ENCODE measurements at regions of chr13 and their contacts with region 1.

Region 1: GRCh38 chr13:110220471-110220870 is 86.5 kb downstream of the COL4A1 start:
- DNase-seq: no peak
- ATAC-seq: no peak
- H3K4me3 ChIP-seq: no peak overlapping the region
- H3K27ac ChIP-seq: no peak overlapping the region
- H3K4me1 ChIP-seq: no peaks in the 10 kb centered on the region
- H3K27me3 ChIP-seq: no peaks in the 10 kb centered on the region
- CTCF ChIP-seq: no peak

Region 2: DNA sequence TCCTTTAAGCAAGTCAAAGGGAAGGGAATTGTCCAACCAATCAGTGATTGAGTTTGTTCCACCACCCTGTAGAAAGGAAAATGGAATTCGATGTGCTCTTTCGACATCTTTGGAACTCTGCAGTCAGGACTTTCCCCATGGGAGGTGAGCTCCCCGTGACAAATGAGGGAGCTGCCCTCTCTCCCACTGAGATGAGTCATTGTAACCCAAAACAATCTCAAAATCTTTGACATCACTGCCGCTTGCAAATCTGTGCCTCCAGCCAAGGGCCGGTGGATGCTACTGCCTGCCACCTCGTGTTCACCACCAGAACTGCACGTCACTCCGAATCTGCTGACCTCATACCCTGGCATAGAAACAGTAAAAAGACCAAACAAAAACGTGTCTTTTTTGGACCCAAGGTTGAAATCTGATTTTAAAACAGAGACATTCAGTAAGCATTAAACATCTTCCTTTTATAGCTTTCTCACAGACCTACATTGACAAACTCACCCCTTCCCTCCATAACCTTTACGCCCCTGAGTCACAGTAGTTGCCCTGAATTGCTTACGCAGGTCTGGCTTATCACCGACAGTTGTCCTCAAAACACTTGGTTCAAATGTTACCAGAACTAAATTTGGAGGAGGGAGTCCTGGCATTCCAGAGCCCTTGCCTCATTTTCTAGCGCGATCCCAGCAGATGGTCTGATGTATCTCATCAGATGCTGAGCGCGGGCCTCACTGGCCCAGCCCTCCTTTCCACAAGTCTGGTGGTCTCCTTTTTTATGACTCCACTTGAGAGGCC is 191.9 kb after region 1 on chr13:
- intact Hi-C with region 1: loop called in 1 of 3 experiments (anchors 5 kb)
- DNase-seq: peak; percentile 69 to 89 (median 82)
- ATAC-seq: peak; percentile 82 to 95 (median 90)
- H3K4me3 ChIP-seq: no peak overlapping the region
- H3K27ac ChIP-seq: peak overlapping the region in 3 of 4 donors; percentile 35 to 77 (median 55)
- H3K4me1 ChIP-seq: peaks cover 0 to 7% (median 3%) of the 10 kb centered on the region in 3 donors
- H3K27me3 ChIP-seq: no peaks in the 10 kb centered on the region
- CTCF ChIP-seq: peak; percentile 73 to 86 (median 82)

Region 3: DNA sequence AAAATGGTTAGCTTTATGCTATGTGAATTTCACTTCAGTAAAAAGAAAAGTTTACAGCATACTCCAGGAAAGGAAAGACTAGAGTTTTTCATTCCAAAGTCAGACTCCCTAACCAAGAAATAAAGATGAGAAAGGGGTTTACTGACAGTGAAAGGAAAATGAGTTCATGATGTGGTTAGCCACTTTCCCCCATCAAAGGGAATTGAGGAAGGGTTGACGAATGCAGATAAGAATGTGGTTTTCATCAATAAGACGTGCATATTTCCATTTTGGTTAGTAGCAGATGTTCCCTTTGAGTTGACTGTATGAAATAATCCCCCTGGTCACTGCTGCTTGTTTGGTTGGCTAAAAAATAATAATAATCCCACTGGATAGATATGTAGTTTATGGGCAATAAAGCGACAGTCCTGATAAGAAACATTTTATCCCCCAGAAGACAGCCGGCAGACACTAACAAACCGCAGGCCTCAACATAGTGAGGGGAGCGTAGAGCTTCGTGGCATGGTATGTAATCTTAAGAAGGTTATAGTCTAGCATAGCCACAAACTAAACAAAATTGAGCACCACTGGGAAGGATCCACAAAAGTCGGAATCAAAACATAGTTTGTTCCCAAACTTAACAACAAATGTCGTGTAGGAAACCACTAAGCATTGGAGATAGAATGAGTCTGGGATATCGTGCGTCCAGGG is 201.4 kb after region 1 on chr13:
- intact Hi-C with region 1: loop called in 1 of 3 experiments (anchors 5 kb)
- DNase-seq: no peak
- ATAC-seq: peak in 1 of 4 donors; percentile 25
- H3K4me3 ChIP-seq: no peak overlapping the region
- H3K27ac ChIP-seq: no peak overlapping the region
- H3K4me1 ChIP-seq: no peaks in the 10 kb centered on the region
- H3K27me3 ChIP-seq: no peaks in the 10 kb centered on the region
- CTCF ChIP-seq: no peak

Measured in pancreas (tissue), 10 donors.